GM18951 (cell line): ENCODE measurements at regions of chr1 and their contacts with region 1.

Region 1: GRCh38 chr1:58515794-58516401 is 30.6 kb downstream of the OMA1 start:
- POLR2A ChIP-seq: no peak

Region 2: DNA sequence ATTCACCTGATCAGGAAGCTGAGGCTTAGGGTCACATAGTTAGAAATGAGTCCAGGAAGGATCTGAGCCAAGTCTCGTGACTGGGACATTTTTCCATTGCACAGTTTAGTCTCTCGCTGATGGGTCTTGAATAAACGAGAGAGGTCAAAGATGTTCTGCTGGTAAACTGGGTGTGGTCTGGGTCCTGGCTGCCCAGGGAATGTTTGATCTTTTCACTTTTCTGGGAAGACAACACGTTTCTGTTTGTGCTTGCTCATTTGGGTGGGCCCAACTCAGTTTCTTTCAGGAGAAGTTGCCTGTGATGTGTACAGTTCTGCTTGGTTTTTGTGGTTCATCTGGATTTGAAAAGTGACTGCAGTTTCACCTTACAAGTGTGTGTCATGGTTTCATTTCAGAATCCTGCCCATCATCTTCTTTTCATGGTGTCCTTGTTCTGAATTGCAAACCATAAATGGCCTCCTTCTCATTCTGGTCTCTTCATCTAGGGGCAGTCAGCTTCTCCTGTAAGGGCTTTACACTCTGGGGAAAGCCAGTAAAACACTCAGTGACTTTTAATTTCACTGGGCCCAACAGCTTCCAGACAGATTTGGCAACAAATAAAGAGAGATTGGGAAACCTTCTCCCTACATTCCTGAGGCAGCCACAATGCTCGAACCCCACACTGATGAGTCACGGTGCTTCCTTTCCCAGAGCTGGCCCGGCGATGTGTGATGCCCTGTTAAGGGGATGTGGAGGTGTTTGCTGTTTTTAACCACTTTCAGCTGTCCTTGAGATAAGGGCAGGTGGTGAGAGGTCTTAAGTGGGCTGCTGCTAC is 68.4 kb after region 1 on chr1:
- in situ Hi-C with region 1: no loop called
- POLR2A ChIP-seq: no peak

Region 3: DNA sequence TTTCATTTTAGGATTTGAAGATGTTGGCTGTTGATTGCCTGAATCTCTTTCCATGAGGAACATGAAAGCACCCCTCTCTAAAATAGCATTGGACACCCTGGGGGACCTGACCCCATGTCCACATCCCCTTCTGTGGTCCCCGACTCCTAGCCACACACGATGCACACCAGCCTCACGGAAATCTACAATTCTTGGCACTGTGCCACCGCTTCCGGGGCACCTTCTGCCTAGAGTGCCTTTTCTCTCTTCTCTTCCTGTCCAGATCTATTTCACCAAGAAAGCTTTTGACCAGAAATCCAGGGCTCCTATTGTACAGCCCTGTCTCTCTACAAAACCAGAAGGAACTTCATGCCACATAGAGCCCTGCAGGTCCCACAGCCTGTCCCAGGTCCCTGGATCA is 133.7 kb after region 1 on chr1:
- in situ Hi-C with region 1: loop called (anchors 5 kb)
- POLR2A ChIP-seq: no peak

Region 4: GRCh38 chr1:59759156-59759925 is 1243.4 kb after region 1 on chr1:
- in situ Hi-C with region 1: loop called (anchors 25 kb)
- POLR2A ChIP-seq: no peak